ENCODE measurements at regions of chr6 and their contacts with region 1.

Region 1: GRCh38 chr6:88780714-88781389 is 182.6 kb downstream of the RNGTT start:
- H3K4me3 ChIP-seq: no peak overlapping the region
- H3K27ac ChIP-seq: no peak overlapping the region
- H3K4me1 ChIP-seq: no peaks in the 10 kb centered on the region
- CTCF ChIP-seq: peak; percentile 64

Region 2: DNA sequence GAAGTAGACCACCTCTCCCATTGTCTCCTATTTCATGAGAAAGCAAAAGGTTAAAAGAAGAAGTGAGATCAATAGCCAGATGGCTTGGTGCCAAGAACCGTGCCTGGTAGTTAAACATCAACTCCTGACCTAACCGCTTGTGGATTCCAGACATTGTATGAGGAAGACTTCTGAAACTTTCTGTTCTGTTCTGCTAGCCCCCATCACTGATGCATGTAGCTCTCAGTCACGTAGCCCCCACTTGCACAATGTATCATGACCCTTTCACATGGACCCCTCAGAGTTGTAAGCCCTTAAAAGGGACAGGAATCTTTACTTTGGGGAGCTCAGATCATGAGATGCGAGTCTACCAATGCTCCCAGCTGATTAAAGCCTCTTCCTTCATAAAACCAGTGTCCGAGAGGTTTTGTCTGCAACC is 118.7 kb before region 1 on chr6:
- CTCF ChIA-PET with region 1: no interaction called
- POLR2A ChIA-PET with region 1: no interaction called
- H3K4me3 ChIP-seq: no peak overlapping the region
- H3K27ac ChIP-seq: no peak overlapping the region
- H3K4me1 ChIP-seq: no peaks in the 10 kb centered on the region
- CTCF ChIP-seq: no peak

Region 3: GRCh38 chr6:88750936-88751335 is 29.9 kb before region 1 on chr6:
- CTCF ChIA-PET with region 1: interaction called, 12 read pairs
- POLR2A ChIA-PET with region 1: no interaction called
- H3K4me3 ChIP-seq: no peak overlapping the region
- H3K27ac ChIP-seq: no peak overlapping the region
- H3K4me1 ChIP-seq: no peaks in the 10 kb centered on the region
- CTCF ChIP-seq: no peak

Region 4: DNA sequence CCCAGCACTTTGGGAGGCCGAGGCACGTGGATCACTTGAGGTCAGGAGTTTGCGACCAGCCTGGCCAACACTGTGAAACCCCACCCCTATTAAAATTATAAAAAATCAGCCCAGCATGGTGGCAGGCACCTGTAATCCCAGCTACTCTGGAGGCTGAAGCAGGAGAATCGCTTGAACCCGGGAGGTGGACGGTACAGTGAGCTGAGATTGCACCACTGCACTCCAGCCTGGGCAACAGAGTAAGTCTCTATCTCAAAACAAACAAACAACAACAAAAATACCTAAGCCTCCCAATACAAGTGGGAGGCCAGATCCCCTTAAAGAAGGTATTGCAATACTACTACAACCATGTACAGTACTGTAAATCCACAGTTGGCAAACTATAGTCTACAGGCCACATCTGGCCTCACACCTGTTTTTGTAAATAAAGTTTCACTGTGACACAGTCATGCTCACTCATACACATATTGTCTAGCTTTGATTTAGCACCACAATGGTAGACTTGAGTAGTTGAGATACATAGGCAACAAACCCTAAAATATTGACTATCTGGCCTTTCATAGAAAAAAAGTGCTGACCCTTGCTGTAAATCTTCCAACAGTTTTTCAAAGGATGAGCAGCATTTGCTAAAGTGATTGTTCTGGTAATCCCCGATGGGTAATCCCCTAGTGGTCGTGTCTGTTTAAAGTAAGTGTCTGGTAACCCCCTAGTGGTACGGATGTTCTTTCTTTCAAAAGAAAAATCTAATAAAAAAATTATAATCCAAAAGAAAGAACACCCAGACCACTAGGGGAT is 19.4 kb before region 1 on chr6:
- CTCF ChIA-PET with region 1: interaction called, 12 read pairs
- POLR2A ChIA-PET with region 1: no interaction called
- H3K4me3 ChIP-seq: no peak overlapping the region
- H3K27ac ChIP-seq: no peak overlapping the region
- H3K4me1 ChIP-seq: no peaks in the 10 kb centered on the region
- CTCF ChIP-seq: no peak

Region 5: DNA sequence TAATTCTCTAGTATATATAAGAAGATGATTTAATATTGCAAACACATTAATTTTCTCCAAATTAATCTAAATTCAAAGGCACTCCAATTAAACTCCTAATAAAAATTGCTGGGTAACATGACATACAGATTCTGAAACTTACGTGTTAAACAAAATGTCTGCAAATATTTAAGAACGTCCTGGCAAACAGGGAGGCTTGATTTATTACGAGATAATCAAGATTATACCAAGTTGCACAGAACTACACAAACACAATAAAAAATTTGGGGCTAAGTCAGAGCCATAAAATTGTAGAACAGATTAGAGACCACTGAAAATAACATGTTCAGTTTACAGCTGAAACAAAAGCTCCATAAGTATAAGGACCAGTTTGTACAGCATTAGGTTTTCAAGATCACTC is 16.1 kb after region 1 on chr6:
- CTCF ChIA-PET with region 1: interaction called, 19 read pairs
- POLR2A ChIA-PET with region 1: no interaction called
- H3K4me3 ChIP-seq: no peak overlapping the region
- H3K27ac ChIP-seq: no peak overlapping the region
- H3K4me1 ChIP-seq: peaks cover 9% of the 10 kb centered on the region; the same call in 1 of the 2 replicates
- CTCF ChIP-seq: no peak

Measured in HEK293 (cell line).